PC-3 (cell line): ENCODE measurements at regions of chr21 and their contacts with region 1.

Region 1: DNA sequence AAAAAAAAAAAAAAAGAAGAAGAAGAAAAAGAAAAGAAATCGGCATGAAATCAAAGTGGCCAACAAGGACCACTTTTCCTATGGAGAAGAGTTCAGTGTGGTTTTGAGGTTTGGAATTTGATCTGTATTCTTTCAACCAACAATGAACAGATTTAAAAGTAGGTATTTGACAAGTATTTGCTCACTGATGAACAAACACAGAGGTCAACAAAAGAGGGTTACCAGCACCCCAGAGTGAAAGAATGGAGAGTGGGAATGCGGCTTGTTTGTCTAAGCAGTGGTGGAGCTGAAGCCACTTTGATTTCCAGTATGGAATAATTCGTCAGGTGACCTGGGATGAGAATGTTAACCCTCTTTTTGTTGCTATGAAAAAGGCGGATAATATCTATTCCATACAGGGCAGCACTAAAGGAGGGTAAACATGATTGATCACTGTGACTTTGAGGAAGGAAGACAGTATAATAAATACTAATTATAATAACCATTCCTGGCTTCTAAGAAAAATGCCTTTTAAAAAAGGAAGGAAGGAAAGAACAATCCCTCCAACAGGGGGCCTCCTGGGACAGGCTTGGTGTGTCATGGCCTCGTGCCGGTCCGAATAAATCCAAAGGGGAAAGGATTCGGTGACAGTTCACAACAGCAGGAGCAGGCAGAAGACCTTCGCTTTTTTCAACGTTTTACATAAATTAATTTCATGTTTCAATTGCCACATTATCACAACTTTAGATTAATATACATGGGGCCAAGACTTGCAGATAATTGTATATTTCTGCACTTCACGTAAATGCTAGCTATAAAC is 37.2 kb upstream of the SIM2 start:
- DNase-seq: peak; percentile 75
- ATAC-seq: peak; percentile 76
- H3K4me3 ChIP-seq: no peak overlapping the region
- H3K27ac ChIP-seq: peak overlapping the region; percentile 19; the same call in 1 of the 2 replicates
- H3K4me1 ChIP-seq: peaks cover 15% of the 10 kb centered on the region
- H3K27me3 ChIP-seq: no peaks in the 10 kb centered on the region
- CTCF ChIP-seq: peak; percentile 88

Region 2: DNA sequence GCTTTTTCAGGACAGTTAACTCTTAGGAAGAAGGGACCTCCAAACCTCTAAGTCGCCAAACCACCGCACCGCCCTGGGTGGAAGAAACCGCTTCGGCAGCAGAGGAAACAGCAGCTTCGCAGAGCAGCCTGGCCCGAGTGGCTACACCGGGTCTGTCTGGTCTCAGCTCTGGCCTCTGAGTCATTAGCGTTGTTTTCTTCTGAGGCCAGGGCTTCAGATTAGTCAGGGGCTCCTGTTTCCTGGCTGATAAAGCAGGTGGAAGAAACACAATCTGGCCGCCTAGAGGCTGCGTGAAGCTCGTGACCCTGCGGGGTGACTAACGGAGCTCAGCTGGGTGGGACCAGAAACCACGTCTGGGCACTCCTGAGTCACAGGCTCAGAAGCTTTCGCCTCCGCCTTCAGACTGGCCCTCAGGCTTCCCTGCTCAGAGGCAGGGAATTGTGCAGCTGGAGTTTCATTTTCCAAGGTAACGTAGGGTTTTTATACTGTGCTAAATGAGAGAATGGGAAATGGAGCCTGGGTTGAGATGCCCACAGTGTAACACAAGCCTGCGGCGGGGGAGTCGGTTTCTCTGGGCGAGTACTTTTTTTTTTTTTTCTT is 231.7 kb before region 1 on chr21:
- CTCF ChIA-PET with region 1: no interaction called
- POLR2A ChIA-PET with region 1: no interaction called
- intact Hi-C with region 1: loop called (anchors 10 kb)
- DNase-seq: peak; percentile 99
- ATAC-seq: peak; percentile 94
- H3K4me3 ChIP-seq: peak overlapping the region; percentile 69
- H3K27ac ChIP-seq: peak overlapping the region; percentile 97
- H3K4me1 ChIP-seq: peaks cover 30% of the 10 kb centered on the region
- H3K27me3 ChIP-seq: no peaks in the 10 kb centered on the region
- CTCF ChIP-seq: 0 out of 2 replicates have a peak, but pooled peaks have one; percentile 24

Region 3: GRCh38 chr21:36636016-36636415 is 25.7 kb before region 1 on chr21:
- CTCF ChIA-PET with region 1: no interaction called
- POLR2A ChIA-PET with region 1: interaction called, 22 read pairs
- intact Hi-C with region 1: no loop called
- DNase-seq: no peak
- ATAC-seq: peak; percentile 58
- H3K4me3 ChIP-seq: no peak overlapping the region
- H3K27ac ChIP-seq: no peak overlapping the region
- H3K4me1 ChIP-seq: peaks cover 22% of the 10 kb centered on the region
- H3K27me3 ChIP-seq: no peaks in the 10 kb centered on the region
- CTCF ChIP-seq: no peak

Region 4: GRCh38 chr21:36698981-36699891 is 37.5 kb after region 1 on chr21 and contains the start of gene SIM2:
- CTCF ChIA-PET with region 1: no interaction called
- POLR2A ChIA-PET with region 1: no interaction called
- intact Hi-C with region 1: loop called (anchors 1 kb)
- DNase-seq: peak; percentile 92
- ATAC-seq: peak; percentile 65
- H3K4me3 ChIP-seq: peak within 1 kb of the TSS; percentile 95
- H3K27ac ChIP-seq: peak within 1 kb of the TSS; percentile 84
- H3K4me1 ChIP-seq: peaks cover 19% of the 10 kb centered on the region
- H3K27me3 ChIP-seq: no peaks in the 10 kb centered on the region
- CTCF ChIP-seq: no peak
- total RNA-seq, gene SIM2: 71.2 and 104 TPM in 2 replicates

Region 5: GRCh38 chr21:36927719-36928117 is 266.0 kb after region 1 on chr21:
- CTCF ChIA-PET with region 1: no interaction called
- POLR2A ChIA-PET with region 1: no interaction called
- intact Hi-C with region 1: loop called (anchors 5 kb)
- DNase-seq: peak; percentile 95
- ATAC-seq: peak; percentile 93
- H3K4me3 ChIP-seq: no peak overlapping the region
- H3K27ac ChIP-seq: peak overlapping the region; percentile 68
- H3K4me1 ChIP-seq: peaks cover 22% of the 10 kb centered on the region
- H3K27me3 ChIP-seq: no peaks in the 10 kb centered on the region
- CTCF ChIP-seq: peak; percentile 98